PC-3 (cell line): ENCODE measurements at regions of chr15 and their contacts with region 1.

Region 1: DNA sequence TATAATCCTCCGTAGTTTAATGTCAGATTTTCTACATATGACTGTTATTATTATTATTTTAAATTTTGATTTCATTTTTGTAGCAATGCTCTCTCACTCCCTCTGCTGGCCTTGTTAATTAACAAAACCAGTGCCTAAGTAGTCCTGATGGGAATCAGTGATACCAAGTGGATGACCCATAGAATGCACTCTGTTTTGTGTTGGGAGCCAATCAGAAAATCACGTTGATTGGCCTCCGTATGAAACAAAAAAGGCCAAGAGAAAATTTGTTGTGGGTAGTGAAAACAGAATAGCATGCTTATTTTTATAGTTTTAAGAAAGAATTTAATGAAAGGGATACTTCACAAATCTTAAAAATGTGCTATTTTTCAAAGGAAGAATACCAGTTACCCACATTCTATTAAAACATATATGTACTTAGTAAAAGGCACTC is 34.4 kb upstream of the MEIS2 start:
- DNase-seq: peak; percentile 67
- ATAC-seq: peak; percentile 86
- H3K4me3 ChIP-seq: no peak overlapping the region
- H3K27ac ChIP-seq: no peak overlapping the region
- H3K4me1 ChIP-seq: peaks cover 9% of the 10 kb centered on the region; the same call in 1 of the 2 replicates
- H3K27me3 ChIP-seq: peaks cover 7% of the 10 kb centered on the region; the same call in 1 of the 2 replicates
- CTCF ChIP-seq: peak; percentile 66

Region 2: GRCh38 chr15:35519541-35520149 is 1615.1 kb before region 1 on chr15:
- CTCF ChIA-PET with region 1: no interaction called
- POLR2A ChIA-PET with region 1: no interaction called
- intact Hi-C with region 1: loop called (anchors 5 kb)
- DNase-seq: peak; percentile 69
- ATAC-seq: peak; percentile 81
- H3K4me3 ChIP-seq: no peak overlapping the region
- H3K27ac ChIP-seq: no peak overlapping the region
- H3K4me1 ChIP-seq: no peaks in the 10 kb centered on the region
- H3K27me3 ChIP-seq: no peaks in the 10 kb centered on the region
- CTCF ChIP-seq: peak; percentile 89

Region 3: GRCh38 chr15:36645106-36645505 is 489.6 kb before region 1 on chr15:
- CTCF ChIA-PET with region 1: no interaction called
- POLR2A ChIA-PET with region 1: no interaction called
- intact Hi-C with region 1: loop called (anchors 2 kb)
- DNase-seq: peak; percentile 36
- ATAC-seq: no peak
- H3K4me3 ChIP-seq: no peak overlapping the region
- H3K27ac ChIP-seq: no peak overlapping the region
- H3K4me1 ChIP-seq: 0 out of 2 replicates have a peak, but pooled peaks cover 6% of the 10 kb centered on the region
- H3K27me3 ChIP-seq: no peaks in the 10 kb centered on the region
- CTCF ChIP-seq: no peak; the same call in none of the 2 replicates

Region 4: DNA sequence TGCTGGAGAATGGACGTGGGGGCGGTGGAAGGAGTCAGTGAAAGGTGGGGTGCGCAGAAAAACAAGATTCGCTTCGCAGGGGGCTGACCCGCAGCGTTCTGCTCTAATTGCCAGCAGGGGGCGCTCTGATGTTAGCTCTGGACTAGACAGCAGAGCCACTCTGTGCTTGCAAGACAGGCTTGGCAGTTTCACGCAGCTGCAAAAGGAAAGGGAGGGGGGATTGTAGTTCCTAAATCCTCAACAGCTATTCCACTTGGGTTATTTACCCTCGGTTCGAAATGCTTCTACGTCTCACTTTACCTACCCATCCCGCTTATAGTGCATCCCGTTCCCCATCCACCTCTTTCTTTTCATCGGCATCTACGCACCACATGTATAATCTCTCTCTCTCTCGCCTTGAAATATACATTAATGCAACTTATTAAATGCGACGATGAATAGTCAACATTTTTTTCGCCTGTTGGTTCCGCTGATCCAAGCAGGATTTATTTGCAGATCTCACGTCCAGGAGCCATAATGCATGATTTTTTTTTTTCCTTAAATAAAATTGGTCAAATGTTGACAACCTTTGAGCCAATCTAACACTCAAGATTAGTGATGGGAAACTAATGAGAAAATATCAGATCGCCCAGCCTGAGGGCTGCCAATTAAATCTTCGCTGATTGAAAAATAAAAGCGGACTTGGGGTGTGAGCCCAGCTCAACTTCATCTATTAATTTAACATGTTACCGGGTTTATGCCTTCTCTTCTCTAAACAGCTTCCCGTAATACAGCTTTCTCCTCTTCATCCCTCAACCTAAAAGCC is 250.8 kb before region 1 on chr15:
- CTCF ChIA-PET with region 1: interaction called, 7 read pairs
- POLR2A ChIA-PET with region 1: no interaction called
- intact Hi-C with region 1: loop called (anchors 1 kb)
- DNase-seq: peak; percentile 88
- ATAC-seq: peak; percentile 92
- H3K4me3 ChIP-seq: peak overlapping the region; percentile 70
- H3K27ac ChIP-seq: no peak overlapping the region
- H3K4me1 ChIP-seq: peaks cover 12% of the 10 kb centered on the region
- H3K27me3 ChIP-seq: peaks cover 45% of the 10 kb centered on the region
- CTCF ChIP-seq: peak; percentile 89

Region 5: GRCh38 chr15:37217567-37217966 is 82.9 kb after region 1 on chr15:
- CTCF ChIA-PET with region 1: no interaction called
- POLR2A ChIA-PET with region 1: no interaction called
- intact Hi-C with region 1: no loop called
- DNase-seq: no peak
- ATAC-seq: no peak
- H3K4me3 ChIP-seq: no peak overlapping the region
- H3K27ac ChIP-seq: no peak overlapping the region
- H3K4me1 ChIP-seq: no peaks in the 10 kb centered on the region
- H3K27me3 ChIP-seq: peaks cover 66% of the 10 kb centered on the region
- CTCF ChIP-seq: no peak

Region 6: DNA sequence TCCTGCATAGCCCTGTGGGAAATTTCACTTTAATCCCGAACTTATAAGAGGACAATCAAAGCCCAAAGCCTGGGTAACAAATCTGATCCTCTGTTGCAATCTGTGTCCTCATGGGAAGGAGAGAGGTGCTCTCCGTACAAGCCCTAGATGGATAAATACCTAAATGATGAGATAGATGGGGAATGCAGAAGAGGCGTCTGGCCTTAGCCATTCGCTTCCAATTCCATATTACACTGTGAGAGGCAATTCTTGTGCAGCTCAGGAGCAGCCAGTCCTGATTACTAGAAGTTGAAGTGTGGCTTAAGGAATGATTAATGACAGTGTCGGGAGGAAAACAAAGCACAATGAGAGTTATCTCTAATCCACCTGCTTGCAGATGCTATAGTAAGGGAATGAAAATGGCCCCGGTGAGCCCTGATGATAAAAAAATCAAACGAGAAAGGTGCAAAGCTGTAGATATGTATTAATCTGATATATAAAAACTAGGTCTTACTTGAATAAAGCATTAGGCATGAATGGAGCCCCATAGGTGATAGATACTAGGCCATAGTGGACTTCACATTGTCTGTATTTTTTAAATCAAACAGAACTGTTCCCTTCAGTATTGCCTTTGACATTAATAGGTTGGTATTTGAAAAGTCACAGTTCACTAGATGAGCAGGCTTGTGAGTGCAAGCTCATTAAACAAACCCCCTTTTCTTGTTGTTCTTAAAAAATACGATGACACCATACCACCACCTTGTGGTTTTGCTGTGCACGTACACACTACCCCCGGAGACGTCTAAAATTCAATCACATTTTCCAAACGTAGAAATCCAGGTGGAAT is 745.5 kb after region 1 on chr15:
- CTCF ChIA-PET with region 1: interaction called, 5 read pairs
- POLR2A ChIA-PET with region 1: no interaction called
- intact Hi-C with region 1: loop called (anchors 1 kb)
- DNase-seq: peak; percentile 59
- ATAC-seq: peak; percentile 32; the same call in 1 of the 2 replicates
- H3K4me3 ChIP-seq: no peak overlapping the region
- H3K27ac ChIP-seq: no peak overlapping the region
- H3K4me1 ChIP-seq: peaks cover 26% of the 10 kb centered on the region
- H3K27me3 ChIP-seq: peaks cover 49% of the 10 kb centered on the region
- CTCF ChIP-seq: peak; percentile 96